ENCODE measurements at regions of chr16 and their contacts with region 1.

Region 1: DNA sequence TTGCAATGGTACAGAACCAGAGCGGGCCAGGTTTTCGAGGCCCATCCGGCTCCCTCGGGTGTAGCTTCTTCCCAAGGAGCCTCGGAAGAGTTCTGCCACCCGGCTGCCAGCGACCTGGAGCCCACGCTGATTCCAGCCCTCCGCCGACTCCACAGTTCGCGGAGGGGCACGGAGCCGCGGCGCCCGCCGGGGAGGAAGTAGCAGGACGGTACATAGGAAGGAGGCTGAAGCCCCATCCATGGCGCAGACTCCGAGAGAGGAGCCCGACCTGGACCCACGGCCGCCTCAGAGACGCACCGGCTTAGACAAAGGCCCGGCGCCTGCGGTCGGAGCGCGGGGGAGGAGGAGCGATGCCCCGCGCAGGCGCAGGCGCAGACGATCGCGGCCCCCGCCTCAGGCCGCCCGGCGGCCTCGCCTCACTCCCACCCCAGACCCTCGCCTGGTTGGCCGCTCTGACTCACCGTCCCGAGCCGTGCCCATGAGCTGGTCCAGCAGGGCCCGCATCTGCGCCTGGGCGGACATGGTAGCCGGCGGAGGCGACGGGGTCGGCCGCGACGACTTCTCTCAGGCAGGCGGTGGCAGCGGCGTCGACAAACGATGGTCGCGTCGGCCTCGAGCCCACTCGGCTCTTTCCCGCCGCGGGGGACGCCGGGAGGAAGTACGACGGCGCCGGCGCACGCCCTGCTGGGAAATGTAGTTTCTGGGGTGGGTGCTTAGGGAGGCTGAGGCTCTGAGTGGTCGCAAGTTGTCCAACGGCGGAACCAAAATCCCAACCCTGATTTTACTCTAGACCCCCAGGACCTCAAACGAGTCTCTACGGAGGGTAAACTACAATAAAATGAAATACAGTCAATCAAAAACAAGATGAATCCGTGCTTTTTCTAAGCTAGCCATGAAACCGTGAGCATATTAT is at the start of gene LUC7L:
- DNase-seq: peak; percentile 34
- ATAC-seq: peak; percentile 94
- H3K4me3 ChIP-seq: peak within 1 kb of the TSS; percentile 56 to 81
- H3K27ac ChIP-seq: peak within 1 kb of the TSS; percentile 82
- H3K4me1 ChIP-seq: peaks cover 0 to 6% of the 10 kb centered on the region in 2 experiments; a peak in 2 of 4 replicates
- H3K27me3 ChIP-seq: no peaks in the 10 kb centered on the region
- CTCF ChIP-seq: no peak
- POLR2A ChIP-seq: peak; percentile 77
- RAD21 ChIP-seq: no peak
- total RNA-seq, gene LUC7L: 50.5 TPM

Region 2: DNA sequence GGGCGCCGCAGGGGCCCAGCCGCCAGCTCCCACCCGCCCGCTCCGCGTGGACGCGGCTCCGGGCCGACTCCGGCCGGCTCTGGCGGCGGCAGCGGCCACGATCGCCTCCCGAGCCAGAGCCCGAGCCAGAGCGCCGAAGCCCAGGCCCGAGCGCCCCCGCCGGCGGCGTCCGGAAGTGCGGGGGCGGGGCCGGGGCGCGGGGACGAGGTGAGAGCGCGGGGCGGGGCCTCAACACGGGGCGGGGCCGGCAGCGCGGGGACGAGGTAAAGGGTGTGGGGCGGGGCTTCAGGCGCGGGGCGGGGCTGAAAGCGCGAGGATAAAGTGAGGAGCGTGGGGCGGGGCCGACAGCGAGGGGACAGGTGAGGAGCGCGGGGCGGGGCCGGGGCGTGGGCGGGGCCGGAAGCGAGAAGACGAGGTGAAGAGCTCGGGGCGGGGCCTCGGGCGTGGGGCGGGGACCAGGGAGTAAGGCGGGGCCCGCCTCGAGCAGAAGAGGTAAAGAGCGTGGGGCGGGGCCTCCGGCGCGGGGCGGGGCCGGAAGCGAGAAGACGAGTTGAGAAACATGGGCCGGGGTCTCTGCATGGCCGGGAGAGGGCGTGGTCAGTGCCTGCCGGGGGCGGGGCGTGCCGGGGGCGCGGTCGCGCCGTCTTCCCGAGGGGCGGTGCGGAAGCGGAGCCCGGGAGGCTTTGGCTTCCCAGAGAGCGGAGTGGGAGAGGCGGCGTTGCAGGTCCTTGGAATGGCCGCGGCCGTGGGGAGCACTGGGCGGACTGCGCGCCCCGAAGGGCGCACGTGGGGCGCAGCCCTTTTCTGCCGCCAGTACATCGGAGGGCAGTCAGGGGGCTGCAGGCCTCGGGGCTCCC is 123.7 kb after region 1 on chr16 and contains the start of gene AXIN1:
- CTCF ChIA-PET with region 1: no interaction called
- POLR2A ChIA-PET with region 1: interaction called, 3 read pairs
- RAD21 ChIA-PET with region 1: no interaction called
- intact Hi-C with region 1: loop called (anchors 5 kb)
- DNase-seq: peak; percentile 81
- ATAC-seq: peak; percentile 87
- H3K4me3 ChIP-seq: peak within 1 kb of the TSS; percentile 54 to 63
- H3K27ac ChIP-seq: peak within 1 kb of the TSS; percentile 59; the same call in 1 of the 2 replicates
- H3K4me1 ChIP-seq: peaks cover 2 to 7% of the 10 kb centered on the region in 2 experiments; a peak in 1 of 4 replicates
- H3K27me3 ChIP-seq: no peaks in the 10 kb centered on the region
- CTCF ChIP-seq: no peak
- POLR2A ChIP-seq: no peak
- RAD21 ChIP-seq: no peak
- total RNA-seq, gene AXIN1: 20.2 TPM

Measured in HCT116 (cell line).